ENCODE measurements at regions of chr6 and their contacts with region 1.

Region 1: DNA sequence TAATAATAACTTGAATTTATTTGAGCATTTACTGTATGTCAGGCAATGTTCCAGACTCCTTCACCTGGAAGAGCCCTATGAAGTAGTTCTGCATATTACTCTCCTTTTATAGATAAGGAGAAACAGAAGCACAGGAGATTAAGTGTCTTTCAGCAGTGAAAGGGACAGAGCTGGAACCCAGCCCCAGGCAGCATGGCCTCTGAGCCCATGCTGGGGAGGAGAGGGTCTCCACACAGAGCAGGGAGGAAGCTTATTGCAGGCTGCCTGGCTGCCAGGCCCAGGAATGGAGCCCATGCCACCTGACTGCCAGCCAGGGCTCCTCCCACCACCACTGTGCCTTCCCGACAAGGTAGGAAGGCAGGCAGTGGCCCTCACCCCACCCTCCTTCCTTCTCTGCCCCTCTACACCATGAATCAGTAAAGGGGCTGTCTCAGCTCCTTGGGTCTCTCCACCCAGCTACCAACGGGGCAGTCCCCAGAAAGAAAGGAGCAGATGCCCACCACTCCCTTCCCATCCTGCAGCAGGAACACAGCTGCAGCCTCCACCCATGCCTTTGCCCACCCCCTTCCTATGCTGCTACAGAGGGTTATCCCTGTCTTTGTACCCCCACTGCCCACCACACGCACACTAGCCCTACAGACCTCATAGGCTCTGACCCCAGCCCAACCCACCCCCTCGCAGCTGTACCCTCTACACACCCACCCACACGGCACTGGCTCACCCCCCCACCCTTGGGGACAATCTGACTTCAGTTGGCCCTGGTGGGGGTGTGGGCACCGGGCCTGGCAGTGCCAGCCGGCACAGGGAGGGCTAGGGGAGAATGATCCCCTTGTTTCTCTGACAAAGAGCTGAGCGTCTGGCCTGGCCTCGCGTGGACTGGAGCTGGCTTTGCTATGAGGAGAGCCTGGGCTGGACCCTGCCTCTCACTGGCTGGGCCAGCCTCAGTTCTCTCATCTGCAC is 41.8 kb downstream of the TFEB start:
- DNase-seq: peak; percentile 81 to 98 (median 94)

Region 2: DNA sequence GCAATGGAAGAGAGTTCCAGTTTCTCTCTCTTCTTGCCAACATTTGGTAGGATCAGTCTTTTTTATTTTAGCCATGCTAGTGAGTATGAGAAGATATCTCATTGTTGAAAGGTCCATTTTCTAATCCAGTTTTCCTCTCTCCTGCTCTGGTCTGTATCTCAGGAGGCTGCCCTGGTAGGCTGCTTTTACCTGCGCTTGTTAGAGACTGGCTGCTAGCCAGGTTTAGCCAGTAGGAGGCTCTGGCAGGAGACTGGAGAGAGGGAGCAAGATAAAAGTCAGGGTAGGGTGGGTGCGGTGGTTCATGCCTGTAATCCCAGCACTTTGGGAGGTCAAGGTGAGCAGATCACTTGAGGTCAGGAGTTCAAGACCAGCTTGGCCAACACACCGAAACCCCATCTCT is 216.0 kb before region 1 on chr6:
- intact Hi-C with region 1: no loop called
- DNase-seq: no peak

Region 3: DNA sequence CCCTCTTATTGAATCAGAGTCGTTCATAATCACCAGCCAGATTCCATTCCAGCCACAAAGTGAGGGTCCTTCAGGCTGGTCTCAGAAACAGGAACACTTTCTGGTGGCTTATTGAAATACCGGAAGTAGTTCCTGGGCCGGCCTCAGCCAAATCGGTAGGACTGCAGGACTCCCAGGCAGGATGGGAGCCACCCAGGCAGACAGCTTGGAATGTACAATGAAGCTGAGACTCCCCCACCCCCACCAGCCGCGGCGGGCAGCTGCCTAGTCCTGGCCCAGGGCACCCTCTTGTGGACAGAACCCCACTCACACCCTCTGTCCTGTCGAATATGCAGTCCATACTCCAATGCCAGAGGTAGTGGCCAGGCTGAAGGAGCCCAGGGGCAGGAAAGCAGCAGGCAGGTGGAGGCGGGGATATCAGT is 11.5 kb before region 1 on chr6:
- intact Hi-C with region 1: no loop called
- DNase-seq: peak; percentile 83 to 96 (median 92)

Region 4: GRCh38 chr6:41735427-41736356 is 42.1 kb after region 1 on chr6 and contains the start of gene TFEB:
- intact Hi-C with region 1: loop called (anchors 2 kb)
- DNase-seq: peak; percentile 94 to 99 (median 98)

Measured in head of caudate nucleus (tissue), 42 donors.